Activated CD4-positive, alpha-beta T cell treated with anti-CD3 and anti-CD28 coated beads for 36 hours (primary cell): ENCODE measurements at regions of chr4 and their contacts with region 1.

Region 1: DNA sequence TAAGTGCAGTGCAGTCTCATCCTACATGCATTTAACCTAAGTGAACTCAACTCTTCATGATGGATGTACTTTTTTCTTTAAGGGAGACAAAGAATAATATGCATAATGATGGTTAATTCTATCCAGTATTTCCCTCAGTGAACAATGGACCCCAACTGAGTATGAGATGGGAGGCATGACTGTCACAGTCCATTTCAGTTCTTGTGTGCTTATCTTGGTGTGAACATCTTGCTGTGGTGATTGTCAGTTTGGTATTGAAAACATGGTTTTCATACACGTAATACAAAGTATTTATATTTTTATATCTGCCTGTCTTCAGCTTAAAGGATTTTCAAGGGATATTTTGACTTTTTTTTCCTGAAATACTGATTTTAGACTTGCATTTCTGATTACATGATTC is 72.0 kb upstream of the NDUFC1 start:
- DNase-seq: no peak
- ATAC-seq: no peak
- H3K4me3 Mint-ChIP-seq: no peak overlapping the region
- H3K27ac Mint-ChIP-seq: no peak overlapping the region
- H3K4me1 Mint-ChIP-seq: no peaks in the 10 kb centered on the region
- H3K27me3 Mint-ChIP-seq: no peaks in the 10 kb centered on the region

Region 2: DNA sequence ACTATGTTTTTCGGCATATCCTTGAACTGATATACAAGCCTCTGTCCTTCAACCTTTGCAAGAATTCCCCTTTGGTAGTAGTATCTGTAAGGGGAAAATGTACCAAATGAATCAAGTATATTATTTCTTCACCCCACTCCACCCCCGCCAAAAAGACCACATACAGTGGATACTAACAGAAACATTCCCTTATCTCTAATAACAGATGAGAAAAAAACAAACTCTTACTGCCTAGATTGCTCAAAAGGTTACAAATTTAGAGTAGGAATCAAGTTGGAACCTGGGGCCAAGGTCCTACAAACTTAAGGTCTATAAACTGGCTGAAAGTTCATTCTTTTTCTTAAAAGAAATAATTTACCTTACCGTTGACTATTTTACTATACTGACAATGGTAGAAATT is 313.7 kb before region 1 on chr4:
- CTCF ChIA-PET with region 1: no interaction called
- POLR2A ChIA-PET with region 1: no interaction called
- intact Hi-C with region 1: loop called in 1 of 2 experiments (anchors 2 kb)
- DNase-seq: no peak
- ATAC-seq: no peak
- H3K4me3 Mint-ChIP-seq: no peak overlapping the region
- H3K27ac Mint-ChIP-seq: no peak overlapping the region
- H3K4me1 Mint-ChIP-seq: peaks cover 10% of the 10 kb centered on the region
- H3K27me3 Mint-ChIP-seq: no peaks in the 10 kb centered on the region